ENCODE measurements at regions of chr10 and their contacts with region 1.

Region 1: DNA sequence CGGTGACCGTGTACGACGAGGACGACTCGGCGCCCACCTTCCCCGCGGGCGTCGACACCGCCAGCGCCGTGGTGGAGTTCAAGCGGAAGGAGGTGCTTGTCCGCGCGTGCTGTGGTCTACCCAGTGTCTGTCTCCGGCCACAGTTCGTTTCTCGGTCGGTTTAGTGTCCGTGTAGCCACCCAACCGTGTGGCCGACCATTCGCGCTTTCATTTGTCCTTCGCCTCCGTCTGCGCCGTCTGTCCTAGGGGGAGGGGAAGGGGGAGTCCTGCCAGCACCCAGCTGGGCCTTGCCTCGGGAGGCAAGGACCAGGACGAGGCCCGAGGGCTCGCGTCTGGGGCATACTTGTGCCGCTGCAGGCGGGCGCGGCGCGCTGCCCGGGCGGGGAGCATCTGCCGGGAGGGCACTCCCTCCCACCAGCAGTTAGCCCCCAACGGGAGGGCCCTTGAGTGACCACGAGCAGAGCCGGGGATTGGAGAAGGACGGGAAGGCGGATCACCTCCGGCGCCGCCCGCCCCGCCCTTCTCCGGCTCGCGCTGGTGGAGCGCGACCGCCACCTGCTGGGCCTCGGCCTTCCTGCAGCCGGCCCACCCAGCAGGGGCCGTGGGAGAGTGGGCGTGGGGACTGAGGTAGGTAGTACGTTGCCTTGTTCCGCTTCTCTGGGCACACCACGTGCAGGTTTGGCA is 28.4 kb downstream of the RET start:
- DNase-seq: peak; percentile 65 to 91 (median 79)
- ATAC-seq: peak; percentile 66 to 97 (median 92)
- H3K4me3 ChIP-seq: peak overlapping the region; percentile 27 to 71 (median 56)
- H3K27ac ChIP-seq: no peak overlapping the region
- H3K4me1 ChIP-seq: peaks cover 0 to 18% (median 9%) of the 10 kb centered on the region in 12 donors
- H3K27me3 ChIP-seq: peaks cover 0 to 41% (median 11%) of the 10 kb centered on the region in 9 donors
- CTCF ChIP-seq: peak; percentile 99 to 100 (median 100)
- POLR2A ChIP-seq: peak in 1 of 2 donors; percentile 23

Region 2: GRCh38 chr10:42753126-42753506 is 352.1 kb before region 1 on chr10:
- intact Hi-C with region 1: loop called in 9 of 10 experiments (anchors 2 to 5 kb)
- DNase-seq: peak; percentile 74 to 87 (median 80)
- ATAC-seq: peak; percentile 87 to 93 (median 92)
- H3K4me3 ChIP-seq: peak overlapping the region; percentile 29 to 66 (median 54)
- H3K27ac ChIP-seq: no peak overlapping the region
- H3K4me1 ChIP-seq: peaks cover 0 to 36% (median 16%) of the 10 kb centered on the region in 12 donors
- H3K27me3 ChIP-seq: peaks cover 10 to 77% (median 38%) of the 10 kb centered on the region in 9 donors
- CTCF ChIP-seq: peak; percentile 81 to 97 (median 85)
- POLR2A ChIP-seq: no peak

Region 3: DNA sequence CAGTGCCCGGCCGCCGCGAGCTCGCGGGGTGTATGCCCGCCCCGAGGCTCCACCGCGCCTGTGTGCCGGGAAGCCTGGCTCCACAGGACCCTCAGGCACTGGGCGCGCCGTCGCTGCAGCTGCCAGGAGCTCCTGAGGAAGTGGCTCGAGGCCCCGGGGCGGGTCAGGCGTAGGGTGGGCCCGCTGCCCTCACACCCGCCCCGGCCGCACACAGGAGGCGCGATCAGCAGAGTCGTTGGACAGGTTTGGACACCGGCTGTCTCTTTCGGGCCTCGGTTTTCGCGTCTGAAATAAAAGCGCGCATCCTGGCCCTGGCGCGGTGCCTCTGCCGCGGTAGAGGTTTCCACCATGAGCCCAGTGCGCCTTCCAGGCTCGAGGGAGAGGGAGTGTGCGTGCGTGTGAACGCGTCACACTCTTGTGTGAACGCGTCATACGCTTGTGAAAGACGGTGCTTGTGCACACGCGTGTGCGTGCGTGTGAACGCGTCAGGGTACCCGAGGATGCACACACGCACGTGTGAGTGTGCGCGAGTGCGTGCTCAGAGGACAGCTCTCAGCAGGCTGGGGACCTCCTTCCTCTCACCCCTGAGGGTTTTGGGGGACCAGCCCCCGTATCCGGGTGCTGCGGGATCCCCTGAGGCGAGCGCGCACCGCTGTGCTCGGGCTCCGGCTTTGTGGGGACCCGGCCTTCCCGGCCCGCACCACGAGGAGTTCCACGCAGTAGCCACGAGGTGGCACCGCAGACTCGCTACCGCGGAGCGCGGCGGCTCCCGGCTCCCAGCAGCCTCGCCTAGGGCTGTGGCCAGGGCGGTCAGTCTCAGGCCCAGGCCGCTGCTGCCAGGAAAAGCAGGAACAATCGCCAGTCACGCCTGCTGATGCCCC is 238.9 kb before region 1 on chr10:
- intact Hi-C with region 1: loop called (anchors 1 to 2 kb)
- DNase-seq: peak; percentile 75 to 93 (median 84)
- ATAC-seq: peak; percentile 96 to 100 (median 100)
- H3K4me3 ChIP-seq: peak overlapping the region in 10 of 12 donors; percentile 5 to 45 (median 29)
- H3K27ac ChIP-seq: no peak overlapping the region
- H3K4me1 ChIP-seq: peaks cover 0 to 18% (median 11%) of the 10 kb centered on the region in 12 donors
- H3K27me3 ChIP-seq: peaks cover 5 to 49% (median 19%) of the 10 kb centered on the region in 9 donors
- CTCF ChIP-seq: peak; percentile 54 to 88 (median 80)
- POLR2A ChIP-seq: no peak

Region 4: GRCh38 chr10:43039624-43040481 is 65.4 kb before region 1 on chr10:
- intact Hi-C with region 1: no loop called
- DNase-seq: peak in 2 of 5 donors; percentile 46 to 49
- ATAC-seq: peak in 2 of 4 donors; percentile 58 to 62
- H3K4me3 ChIP-seq: no peak overlapping the region
- H3K27ac ChIP-seq: no peak overlapping the region
- H3K4me1 ChIP-seq: no peaks in the 10 kb centered on the region
- H3K27me3 ChIP-seq: no peaks in the 10 kb centered on the region
- CTCF ChIP-seq: no peak
- POLR2A ChIP-seq: no peak

Measured in heart left ventricle (tissue), 16 donors.